AG04449 (cell line): ENCODE measurements at regions of chr2 and their contacts with region 1.

Region 1: GRCh38 chr2:224039124-224039940 is at the start of gene SERPINE2:
- DNase-seq: no peak
- H3K4me3 ChIP-seq: peak within 1 kb of the TSS; percentile 72
- CTCF ChIP-seq: peak; percentile 70

Region 2: DNA sequence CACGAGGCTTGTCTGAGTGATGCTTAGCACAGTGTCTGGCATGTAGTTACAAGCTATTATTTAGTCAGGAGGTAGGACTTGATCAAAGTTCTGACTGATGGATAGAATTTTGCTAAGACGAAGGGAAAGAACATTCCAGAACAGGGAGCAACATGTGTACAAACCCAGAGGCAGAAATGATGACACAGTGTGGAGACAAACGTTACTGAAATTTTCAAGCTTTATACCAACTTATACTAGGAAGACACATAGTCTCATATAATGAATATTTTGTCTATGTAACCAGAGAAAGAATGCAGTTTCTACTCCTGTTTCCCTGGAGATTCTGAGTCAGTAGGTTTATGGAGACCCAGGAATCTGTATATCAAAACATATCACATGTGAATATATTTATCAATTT is 239.2 kb after region 1 on chr2:
- CTCF ChIA-PET with region 1: interaction called, 68 read pairs
- POLR2A ChIA-PET with region 1: interaction called, 5 read pairs
- DNase-seq: peak; percentile 33
- H3K4me3 ChIP-seq: no peak overlapping the region
- CTCF ChIP-seq: peak; percentile 14

Region 3: DNA sequence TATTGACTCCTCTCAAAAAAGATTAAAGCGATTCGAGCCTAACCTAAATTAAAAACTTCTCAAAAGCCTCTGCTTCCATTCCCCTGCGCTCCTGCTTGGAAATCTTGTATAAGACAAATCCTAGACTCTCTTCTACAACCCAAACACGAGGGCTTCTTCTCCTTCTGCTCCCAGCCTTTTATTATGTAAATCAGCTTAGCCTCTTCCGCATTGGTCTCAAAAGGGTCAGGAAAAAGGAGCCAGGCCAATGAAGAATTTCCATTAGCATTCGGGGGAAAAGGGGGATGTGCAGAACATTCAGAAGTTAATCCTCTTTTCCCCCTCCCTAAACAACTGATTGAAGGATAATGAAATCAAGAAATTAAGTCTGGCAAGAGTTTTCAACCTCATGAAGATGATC is 254.6 kb after region 1 on chr2:
- CTCF ChIA-PET with region 1: no interaction called
- POLR2A ChIA-PET with region 1: no interaction called
- DNase-seq: no peak
- H3K4me3 ChIP-seq: no peak overlapping the region
- CTCF ChIP-seq: no peak